ENCODE measurements at regions of chr1 and their contacts with region 1.

Region 1: DNA sequence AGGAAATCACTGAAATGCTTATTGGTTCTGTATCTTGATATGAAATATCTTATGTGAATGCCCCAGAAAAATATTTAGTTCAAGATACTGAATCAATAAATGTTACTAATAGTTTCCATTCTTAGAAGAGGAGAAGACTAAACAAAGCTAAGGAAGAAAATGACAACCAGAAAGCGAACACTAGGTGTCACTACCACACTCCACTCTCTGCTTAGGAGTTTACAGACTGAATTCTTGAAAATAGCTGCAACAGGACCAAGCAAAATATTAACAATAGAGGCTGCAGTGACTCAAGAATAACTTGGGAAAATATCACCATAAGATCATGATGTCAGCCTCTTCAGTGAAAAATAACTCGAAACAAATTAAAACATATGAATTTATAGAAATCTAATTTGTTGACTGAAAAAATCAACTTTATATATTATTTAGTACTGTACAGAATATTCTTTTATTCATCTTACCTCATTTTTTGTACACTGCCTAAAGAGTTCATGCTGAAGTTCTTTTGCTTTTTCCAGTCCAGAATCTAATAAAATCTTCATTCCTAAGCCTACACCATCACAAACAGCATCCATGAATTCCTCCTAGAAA is 61.6 kb downstream of the KIF14 start:
- DNase-seq: peak; percentile 51
- ATAC-seq: peak; percentile 81
- H3K4me3 ChIP-seq: no peak overlapping the region
- H3K27ac ChIP-seq: no peak overlapping the region
- H3K4me1 ChIP-seq: no peaks in the 10 kb centered on the region
- H3K27me3 ChIP-seq: no peaks in the 10 kb centered on the region
- CTCF ChIP-seq: peak; percentile 64 to 80 (median 75)
- POLR2A ChIP-seq: no peak
- RAD21 ChIP-seq: peak; percentile 78

Region 2: GRCh38 chr1:200538179-200538578 is 20.8 kb before region 1 on chr1:
- CTCF ChIA-PET with region 1: interaction called, 24 read pairs
- POLR2A ChIA-PET with region 1: no interaction called
- RAD21 ChIA-PET with region 1: no interaction called
- intact Hi-C with region 1: no loop called
- DNase-seq: no peak
- ATAC-seq: no peak
- H3K4me3 ChIP-seq: no peak overlapping the region
- H3K27ac ChIP-seq: no peak overlapping the region
- H3K4me1 ChIP-seq: peaks cover 0 to 9% of the 10 kb centered on the region in 2 experiments; a peak in 3 of 4 replicates
- H3K27me3 ChIP-seq: no peaks in the 10 kb centered on the region
- CTCF ChIP-seq: no peak
- POLR2A ChIP-seq: no peak
- RAD21 ChIP-seq: no peak

Region 3: GRCh38 chr1:200837931-200838571 is 279.1 kb after region 1 on chr1:
- CTCF ChIA-PET with region 1: interaction called, 7 read pairs
- POLR2A ChIA-PET with region 1: no interaction called
- RAD21 ChIA-PET with region 1: no interaction called
- intact Hi-C with region 1: loop called (anchors 2 kb)
- DNase-seq: peak; percentile 24
- ATAC-seq: no peak
- H3K4me3 ChIP-seq: no peak overlapping the region
- H3K27ac ChIP-seq: no peak overlapping the region
- H3K4me1 ChIP-seq: no peaks in the 10 kb centered on the region
- H3K27me3 ChIP-seq: no peaks in the 10 kb centered on the region
- CTCF ChIP-seq: peak in 2 of 3 experiments; percentile 50 to 55; a peak in 4 of 6 replicates
- POLR2A ChIP-seq: no peak
- RAD21 ChIP-seq: peak; percentile 63